Naive thymus-derived CD4-positive, alpha-beta T cell (primary cell): ENCODE measurements at regions of chr16 and their contacts with region 1.

Region 1: DNA sequence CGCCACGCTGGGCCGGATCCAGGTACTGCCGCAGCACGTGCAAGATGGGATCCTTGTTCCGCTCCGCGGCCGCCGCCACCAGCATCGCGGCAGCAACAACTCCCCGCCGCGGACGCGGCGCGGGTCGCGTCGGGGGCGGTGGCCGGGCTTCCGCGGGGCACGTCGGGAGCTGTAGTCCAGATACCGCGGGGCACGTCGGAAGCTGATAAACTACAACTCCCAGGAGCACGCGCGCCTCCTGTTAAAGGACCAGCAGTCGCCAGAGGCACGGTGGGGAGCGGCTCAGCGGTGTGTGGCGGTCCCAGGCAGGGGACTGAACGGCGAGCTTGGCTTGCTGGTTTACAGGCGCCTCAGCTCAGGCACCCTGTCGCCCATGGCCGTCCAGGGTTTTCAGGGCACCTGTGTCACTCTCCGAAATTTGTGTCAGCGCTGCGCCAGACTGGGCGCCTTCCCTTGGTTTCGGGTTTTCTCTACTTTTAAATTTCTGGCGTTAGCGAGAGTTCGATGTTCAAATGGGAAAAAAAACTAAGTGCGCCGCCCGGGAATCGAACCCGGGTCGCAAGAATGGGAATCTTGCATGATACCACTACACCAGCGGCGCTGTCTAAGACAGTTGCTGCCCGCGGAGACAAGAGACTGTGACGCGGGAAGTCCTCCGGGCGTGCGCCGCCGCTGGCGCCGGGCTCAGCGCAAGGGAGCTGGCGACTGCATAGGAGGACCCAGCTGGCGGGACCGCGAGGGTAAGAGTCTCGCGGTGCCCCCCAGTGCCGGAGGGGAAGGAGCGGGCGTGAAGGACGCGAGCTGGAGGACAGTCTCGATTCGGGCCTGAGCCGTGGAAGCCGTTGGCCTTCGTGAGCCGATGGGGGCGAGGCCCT is at the start of gene METTL26:
- DNase-seq: peak; percentile 91 to 98 (median 94)
- ATAC-seq: peak; percentile 90
- H3K4me3 ChIP-seq: peak within 1 kb of the TSS; percentile 99
- H3K4me3 Mint-ChIP-seq: peak within 1 kb of the TSS; percentile 92 to 99 (median 98)
- H3K27ac ChIP-seq: peak within 1 kb of the TSS; percentile 76
- H3K27ac Mint-ChIP-seq: peak within 1 kb of the TSS; percentile 97 to 99 (median 99)
- H3K4me1 ChIP-seq: peaks cover 5 to 14% of the 10 kb centered on the region in 2 donors
- H3K4me1 Mint-ChIP-seq: peaks cover 0 to 13% (median 10%) of the 10 kb centered on the region in 7 donors
- H3K27me3 ChIP-seq: no peaks in the 10 kb centered on the region
- H3K27me3 Mint-ChIP-seq: peaks cover 0 to 6% (median 0%) of the 10 kb centered on the region in 5 donors
- total RNA-seq, gene METTL26: 41.7 to 97.5 (median 64.0) TPM

Region 2: GRCh38 chr16:234468-235305 is 401.8 kb before region 1 on chr16 and contains the start of gene FAM234A:
- CTCF ChIA-PET with region 1: no interaction called
- POLR2A ChIA-PET with region 1: no interaction called
- intact Hi-C with region 1: loop called in 1 of 2 experiments (anchors 2 kb)
- DNase-seq: peak; percentile 93 to 98 (median 97)
- ATAC-seq: peak; percentile 90
- H3K4me3 ChIP-seq: peak within 1 kb of the TSS; percentile 82
- H3K4me3 Mint-ChIP-seq: peak within 1 kb of the TSS; percentile 81 to 99 (median 96)
- H3K27ac ChIP-seq: peak within 1 kb of the TSS; percentile 99
- H3K27ac Mint-ChIP-seq: peak within 1 kb of the TSS; percentile 90 to 100 (median 99)
- H3K4me1 ChIP-seq: peaks cover 0 to 5% of the 10 kb centered on the region in 2 donors
- H3K4me1 Mint-ChIP-seq: peaks cover 7 to 25% (median 16%) of the 10 kb centered on the region in 7 donors
- H3K27me3 ChIP-seq: no peaks in the 10 kb centered on the region
- H3K27me3 Mint-ChIP-seq: peaks cover 0 to 3% (median 0%) of the 10 kb centered on the region in 5 donors
- total RNA-seq, gene FAM234A: 30.4 to 43.9 (median 32.9) TPM

Region 3: DNA sequence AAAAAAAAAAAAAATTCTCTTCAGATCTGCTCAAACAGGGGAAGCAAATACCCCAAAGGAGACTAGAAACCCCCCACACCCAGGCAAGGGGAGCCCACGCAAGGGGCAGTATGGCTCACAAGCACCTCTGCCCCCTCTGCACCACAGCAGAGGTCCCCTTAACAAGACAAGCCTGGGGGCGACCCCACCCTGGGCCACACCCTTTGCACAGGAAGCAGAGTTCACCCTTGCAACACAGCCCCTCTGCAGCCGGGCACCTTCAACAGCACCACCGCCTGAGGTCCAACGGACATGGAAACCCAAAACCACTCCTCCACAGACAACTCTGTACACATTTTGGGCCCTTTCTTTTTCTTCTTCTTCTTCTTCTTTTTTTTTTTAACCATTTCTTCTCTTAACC is 296.8 kb before region 1 on chr16:
- CTCF ChIA-PET with region 1: no interaction called
- POLR2A ChIA-PET with region 1: no interaction called
- intact Hi-C with region 1: no loop called
- DNase-seq: peak in 1 of 9 donors; percentile 25
- ATAC-seq: peak; percentile 61
- H3K4me3 ChIP-seq: peak overlapping the region; percentile 20
- H3K4me3 Mint-ChIP-seq: peak overlapping the region; percentile 60 to 87 (median 75)
- H3K27ac ChIP-seq: no peak overlapping the region
- H3K27ac Mint-ChIP-seq: peak overlapping the region; percentile 34 to 85 (median 80)
- H3K4me1 ChIP-seq: peaks cover 13 to 40% of the 10 kb centered on the region in 2 donors
- H3K4me1 Mint-ChIP-seq: peaks cover 35 to 79% (median 57%) of the 10 kb centered on the region in 7 donors
- H3K27me3 ChIP-seq: no peaks in the 10 kb centered on the region
- H3K27me3 Mint-ChIP-seq: no peaks in the 10 kb centered on the region

Region 4: DNA sequence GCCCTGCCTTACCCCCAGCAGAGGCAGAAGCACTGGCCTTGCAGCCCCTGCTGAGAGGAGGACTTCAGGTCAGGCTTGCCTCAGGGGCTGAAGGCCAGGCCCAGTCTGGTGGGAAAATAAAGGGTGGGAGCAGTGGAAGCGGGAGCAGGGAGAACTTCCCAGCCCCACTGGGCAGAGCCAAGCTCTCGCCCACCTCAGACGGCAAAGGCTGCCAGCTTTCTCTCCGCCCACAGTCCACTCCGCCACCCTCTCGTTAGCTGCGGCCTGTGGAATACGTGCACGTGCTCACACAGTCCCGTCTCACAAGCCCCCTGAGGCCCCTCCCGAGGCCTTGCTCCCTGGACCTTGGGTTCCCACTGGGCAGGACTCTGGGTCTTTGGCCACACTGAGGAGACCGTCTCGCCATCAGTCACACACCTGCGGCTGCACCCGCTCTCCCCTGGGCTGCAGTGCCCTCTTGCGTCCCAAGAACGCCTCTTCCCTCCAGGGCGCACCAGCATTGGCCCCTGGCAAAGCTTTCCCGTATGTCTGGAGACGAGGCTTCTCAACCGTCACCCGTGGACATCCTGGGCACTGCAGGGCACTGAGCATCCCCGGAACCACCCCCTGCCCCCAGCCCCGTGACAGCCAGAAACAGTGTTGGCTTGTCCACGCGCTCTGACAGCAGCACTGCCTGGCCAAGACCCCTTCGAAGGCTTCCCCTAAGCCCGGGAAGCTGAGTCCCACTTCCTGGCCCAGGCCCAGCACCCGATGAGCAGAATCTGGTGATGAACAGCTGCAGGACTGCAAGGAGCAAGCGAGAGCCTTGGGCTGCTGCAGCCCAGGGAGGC is 274.4 kb before region 1 on chr16:
- CTCF ChIA-PET with region 1: no interaction called
- POLR2A ChIA-PET with region 1: no interaction called
- intact Hi-C with region 1: no loop called
- DNase-seq: peak; percentile 43 to 74 (median 70)
- ATAC-seq: peak; percentile 92
- H3K4me3 ChIP-seq: no peak overlapping the region
- H3K4me3 Mint-ChIP-seq: peak overlapping the region in 8 of 10 donors; percentile 12 to 77 (median 54)
- H3K27ac ChIP-seq: no peak overlapping the region
- H3K27ac Mint-ChIP-seq: peak overlapping the region in 7 of 9 donors; percentile 32 to 84 (median 69)
- H3K4me1 ChIP-seq: no peaks in the 10 kb centered on the region
- H3K4me1 Mint-ChIP-seq: peaks cover 0 to 12% (median 6%) of the 10 kb centered on the region in 7 donors
- H3K27me3 ChIP-seq: no peaks in the 10 kb centered on the region
- H3K27me3 Mint-ChIP-seq: peaks cover 0 to 4% (median 0%) of the 10 kb centered on the region in 5 donors

Region 5: GRCh38 chr16:527006-527753 is 109.3 kb before region 1 on chr16 and contains the start of gene CAPN15:
- CTCF ChIA-PET with region 1: no interaction called
- POLR2A ChIA-PET with region 1: interaction called, 5 read pairs
- intact Hi-C with region 1: loop called (anchors 1 kb)
- DNase-seq: peak; percentile 79 to 93 (median 89)
- ATAC-seq: peak; percentile 91
- H3K4me3 ChIP-seq: peak within 1 kb of the TSS; percentile 78
- H3K4me3 Mint-ChIP-seq: peak within 1 kb of the TSS; percentile 83 to 93 (median 88)
- H3K27ac ChIP-seq: peak within 1 kb of the TSS; percentile 97
- H3K27ac Mint-ChIP-seq: peak within 1 kb of the TSS; percentile 68 to 93 (median 83)
- H3K4me1 ChIP-seq: peaks cover 26 to 28% of the 10 kb centered on the region in 2 donors
- H3K4me1 Mint-ChIP-seq: peaks cover 21 to 38% (median 30%) of the 10 kb centered on the region in 7 donors
- H3K27me3 ChIP-seq: no peaks in the 10 kb centered on the region
- H3K27me3 Mint-ChIP-seq: no peaks in the 10 kb centered on the region
- total RNA-seq, gene CAPN15: 51.0 to 89.8 (median 55.6) TPM

Region 6: DNA sequence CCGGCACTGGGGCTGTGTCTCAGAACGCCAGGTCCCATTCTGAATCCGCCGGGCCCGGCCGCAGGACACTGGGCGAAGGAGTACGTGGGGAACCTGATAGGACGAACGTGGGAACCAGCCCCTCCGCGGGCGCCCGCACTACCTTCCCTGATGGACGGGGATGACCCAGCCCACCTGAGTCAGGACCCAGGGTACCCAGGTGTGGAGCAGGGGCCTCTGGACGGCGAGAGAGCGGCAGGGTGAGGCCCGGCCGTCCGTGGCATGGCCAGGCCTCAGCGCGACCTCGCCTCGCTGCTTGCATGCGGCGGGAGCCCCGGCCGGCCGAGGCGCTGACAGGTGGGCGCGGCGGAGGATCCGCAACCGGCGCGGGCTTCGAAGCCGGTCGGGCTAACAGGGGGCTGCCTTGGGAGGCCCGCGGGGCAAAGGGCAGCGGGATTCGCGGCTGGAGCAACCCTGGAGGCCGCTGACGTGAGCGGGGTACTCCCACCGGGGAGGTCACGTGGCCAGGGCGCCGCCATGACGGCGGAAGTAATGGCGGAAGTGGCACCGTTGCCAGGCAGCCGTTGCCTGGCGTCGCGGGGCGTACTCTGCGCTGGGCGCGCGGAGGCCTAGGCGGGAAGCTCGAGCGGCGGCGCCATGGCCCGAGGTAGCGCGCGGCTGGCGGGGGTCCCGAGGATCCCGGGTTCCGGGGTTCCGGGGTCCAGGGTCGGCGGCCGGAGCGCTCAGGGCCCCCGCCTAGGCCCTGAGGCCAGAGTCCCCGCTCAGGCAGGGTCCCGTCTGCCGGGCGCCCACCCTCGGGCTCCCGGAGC is 12.5 kb after region 1 on chr16 and contains the start of gene WDR90:
- CTCF ChIA-PET with region 1: no interaction called
- POLR2A ChIA-PET with region 1: interaction called, 30 read pairs
- intact Hi-C with region 1: loop called in 1 of 2 experiments (anchors 1 kb)
- DNase-seq: peak; percentile 81 to 94 (median 89)
- ATAC-seq: peak; percentile 96
- H3K4me3 ChIP-seq: peak within 1 kb of the TSS; percentile 77
- H3K4me3 Mint-ChIP-seq: peak within 1 kb of the TSS; percentile 63 to 87 (median 78)
- H3K27ac ChIP-seq: peak within 1 kb of the TSS; percentile 97
- H3K27ac Mint-ChIP-seq: peak within 1 kb of the TSS in 7 of 9 donors; percentile 18 to 88 (median 77)
- H3K4me1 ChIP-seq: peaks cover 6 to 9% of the 10 kb centered on the region in 2 donors
- H3K4me1 Mint-ChIP-seq: peaks cover 4 to 26% (median 10%) of the 10 kb centered on the region in 7 donors
- H3K27me3 ChIP-seq: no peaks in the 10 kb centered on the region
- H3K27me3 Mint-ChIP-seq: no peaks in the 10 kb centered on the region
- total RNA-seq, gene WDR90: 11.7 to 70.6 (median 13.9) TPM

Region 7: GRCh38 chr16:684067-684794 is 47.8 kb after region 1 on chr16 and contains the start of gene JMJD8:
- CTCF ChIA-PET with region 1: no interaction called
- POLR2A ChIA-PET with region 1: interaction called, 3 read pairs
- intact Hi-C with region 1: loop called (anchors 1 kb)
- DNase-seq: peak; percentile 88 to 97 (median 91)
- ATAC-seq: peak; percentile 75
- H3K4me3 ChIP-seq: peak within 1 kb of the TSS; percentile 52
- H3K4me3 Mint-ChIP-seq: peak within 1 kb of the TSS; percentile 58 to 87 (median 76)
- H3K27ac ChIP-seq: peak within 1 kb of the TSS; percentile 78
- H3K27ac Mint-ChIP-seq: peak within 1 kb of the TSS in 6 of 9 donors; percentile 38 to 82 (median 58)
- H3K4me1 ChIP-seq: peaks cover 9 to 36% of the 10 kb centered on the region in 2 donors
- H3K4me1 Mint-ChIP-seq: peaks cover 10 to 31% (median 22%) of the 10 kb centered on the region in 7 donors
- H3K27me3 ChIP-seq: no peaks in the 10 kb centered on the region
- H3K27me3 Mint-ChIP-seq: no peaks in the 10 kb centered on the region
- total RNA-seq, gene JMJD8: 26.8 to 48.1 (median 37.2) TPM

Region 8: GRCh38 chr16:807347-808084 is 171.1 kb after region 1 on chr16:
- CTCF ChIA-PET with region 1: no interaction called
- POLR2A ChIA-PET with region 1: no interaction called
- intact Hi-C with region 1: loop called in 1 of 2 experiments (anchors 1 kb)
- DNase-seq: peak; percentile 53 to 89 (median 68)
- ATAC-seq: peak; percentile 95
- H3K4me3 ChIP-seq: peak overlapping the region; percentile 92
- H3K4me3 Mint-ChIP-seq: peak overlapping the region; percentile 92 to 100 (median 95)
- H3K27ac ChIP-seq: peak overlapping the region; percentile 88
- H3K27ac Mint-ChIP-seq: peak overlapping the region; percentile 92 to 98 (median 97)
- H3K4me1 ChIP-seq: peaks cover 0 to 9% of the 10 kb centered on the region in 2 donors
- H3K4me1 Mint-ChIP-seq: peaks cover 0 to 16% (median 12%) of the 10 kb centered on the region in 7 donors
- H3K27me3 ChIP-seq: no peaks in the 10 kb centered on the region
- H3K27me3 Mint-ChIP-seq: peaks cover 0 to 15% (median 5%) of the 10 kb centered on the region in 5 donors

Region 9: DNA sequence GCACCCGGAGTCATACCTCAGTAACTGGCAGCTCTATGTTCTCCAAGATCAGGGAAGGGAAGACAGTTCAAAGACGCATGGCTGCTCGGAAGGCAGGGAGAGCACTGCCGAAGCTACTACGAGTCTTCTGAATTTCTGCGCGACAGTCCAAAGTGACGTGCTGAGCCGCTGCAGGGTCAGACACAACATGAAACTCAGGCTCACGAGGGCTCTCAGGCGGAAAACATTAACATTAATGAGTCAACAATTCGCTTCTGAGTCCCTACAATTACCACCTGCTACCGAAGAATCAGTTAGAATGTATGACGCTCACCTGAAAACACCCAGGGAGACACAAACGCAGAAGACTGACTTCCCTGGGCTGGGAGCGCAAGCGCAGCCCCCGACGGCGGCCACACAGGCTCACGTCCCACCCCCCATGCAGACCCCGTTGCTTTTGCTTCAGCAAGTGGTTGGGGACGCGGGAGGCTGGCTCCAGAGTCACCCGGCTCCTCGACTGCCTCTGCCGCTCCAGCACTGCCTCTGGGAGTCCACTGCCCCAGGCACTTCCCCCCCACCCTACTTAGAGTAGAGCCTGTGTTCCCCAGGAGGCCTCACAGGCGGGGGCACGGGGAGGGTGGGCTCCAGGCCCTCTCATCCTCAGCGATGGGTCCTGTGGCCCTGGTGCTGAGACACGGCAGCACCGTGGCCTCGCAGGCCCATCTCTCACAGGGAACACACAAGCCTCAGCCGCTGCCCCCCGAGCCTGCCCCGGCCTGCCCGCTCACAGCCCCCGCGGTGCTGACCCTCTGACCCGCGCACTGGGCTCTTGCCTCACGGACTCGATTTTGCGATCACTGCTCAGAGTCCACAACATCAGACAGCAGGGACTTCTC is 295.4 kb after region 1 on chr16:
- CTCF ChIA-PET with region 1: no interaction called
- POLR2A ChIA-PET with region 1: no interaction called
- intact Hi-C with region 1: no loop called
- DNase-seq: no peak
- ATAC-seq: no peak
- H3K4me3 ChIP-seq: no peak overlapping the region
- H3K4me3 Mint-ChIP-seq: no peak overlapping the region
- H3K27ac ChIP-seq: no peak overlapping the region
- H3K27ac Mint-ChIP-seq: no peak overlapping the region
- H3K4me1 ChIP-seq: no peaks in the 10 kb centered on the region
- H3K4me1 Mint-ChIP-seq: peaks cover 0 to 4% (median 0%) of the 10 kb centered on the region in 7 donors
- H3K27me3 ChIP-seq: no peaks in the 10 kb centered on the region
- H3K27me3 Mint-ChIP-seq: no peaks in the 10 kb centered on the region